A549 (cell line): ENCODE measurements at regions of chr12 and their contacts with region 1.

Region 1: DNA sequence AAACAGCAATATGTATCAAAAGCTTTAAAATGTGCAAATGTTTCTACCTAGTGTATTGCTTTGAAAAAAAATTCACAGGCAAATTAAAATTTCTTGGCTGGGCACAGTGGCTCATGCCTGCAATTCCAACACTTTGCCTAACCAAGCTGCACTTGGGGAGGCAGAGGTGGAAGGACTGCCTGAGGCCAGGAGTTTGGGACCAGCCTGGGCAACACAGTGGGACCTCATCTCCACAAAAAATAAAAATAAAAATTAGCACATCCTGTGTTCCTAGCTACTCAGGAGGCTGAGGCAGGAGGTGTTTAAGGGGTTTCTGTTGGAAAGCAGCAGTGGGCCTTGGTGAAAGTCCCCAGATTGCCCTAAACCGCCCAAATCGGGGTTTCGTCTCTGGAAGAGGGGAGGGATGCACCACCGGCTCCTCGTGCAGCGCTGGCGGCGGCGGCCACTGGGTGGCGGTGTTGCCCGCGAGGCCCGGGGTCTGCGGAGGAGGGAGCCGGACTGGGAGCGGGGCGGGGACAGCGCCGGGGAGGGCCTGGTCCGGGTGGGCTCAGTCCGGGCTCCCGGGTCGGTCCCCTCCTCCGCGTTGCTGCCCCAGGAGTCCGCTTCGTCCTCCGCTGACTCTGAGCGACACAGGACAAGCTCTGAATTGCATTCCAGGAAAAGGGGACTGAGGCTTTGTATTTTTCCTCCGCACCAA is 265.6 kb downstream of the AACS start:
- DNase-seq: peak; percentile 44 to 80
- ATAC-seq: peak; percentile 97 to 100
- H3K4me3 ChIP-seq: peak overlapping the region; percentile 39
- H3K27ac ChIP-seq: peak overlapping the region in 1 of 2 experiments; percentile 78; a peak in 4 of 6 replicates
- H3K4me1 ChIP-seq: no peaks in the 10 kb centered on the region
- CTCF ChIP-seq: peak; percentile 89
- EP300 ChIP-seq: no peak
- POLR2A ChIP-seq: no peak
- RAD21 ChIP-seq: peak; percentile 75 to 87

Region 2: DNA sequence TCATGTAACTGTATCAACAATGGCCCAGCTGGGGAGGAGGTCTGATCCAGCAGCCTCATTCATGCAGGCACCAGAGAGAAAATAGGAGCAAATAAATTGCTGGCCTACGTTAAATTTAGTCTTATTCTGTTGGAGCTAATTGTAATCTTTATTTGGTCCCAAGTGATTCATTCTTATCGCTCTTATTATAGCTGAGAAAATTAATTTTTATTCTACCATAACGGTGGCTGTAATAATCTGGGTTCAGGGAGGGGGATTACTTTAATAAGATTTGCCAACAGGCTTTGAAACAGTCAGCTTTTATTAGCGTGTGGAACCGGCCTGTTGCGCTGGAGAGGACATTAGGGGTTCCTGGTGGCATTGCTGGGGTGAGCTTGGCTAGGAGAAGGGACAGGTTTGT is 10.6 kb before region 1 on chr12:
- CTCF ChIA-PET with region 1: interaction called, 10 read pairs
- POLR2A ChIA-PET with region 1: no interaction called
- DNase-seq: no peak
- ATAC-seq: no peak
- H3K4me3 ChIP-seq: no peak overlapping the region
- H3K27ac ChIP-seq: no peak overlapping the region
- H3K4me1 ChIP-seq: no peaks in the 10 kb centered on the region
- CTCF ChIP-seq: no peak
- EP300 ChIP-seq: no peak
- POLR2A ChIP-seq: no peak
- RAD21 ChIP-seq: no peak

Region 3: GRCh38 chr12:125346362-125346761 is 15.6 kb after region 1 on chr12:
- CTCF ChIA-PET with region 1: interaction called, 15 read pairs
- POLR2A ChIA-PET with region 1: no interaction called
- DNase-seq: no peak
- ATAC-seq: no peak
- H3K4me3 ChIP-seq: no peak overlapping the region
- H3K27ac ChIP-seq: no peak overlapping the region
- H3K4me1 ChIP-seq: no peaks in the 10 kb centered on the region
- CTCF ChIP-seq: no peak
- EP300 ChIP-seq: no peak
- POLR2A ChIP-seq: no peak
- RAD21 ChIP-seq: 0 out of 5 replicates have a peak, but pooled peaks of 1 of the 2 experiments have one; percentile 16